ENCODE measurements at regions of chr4 and their contacts with region 1.

Region 1: GRCh38 chr4:139167774-139168444 is 9.1 kb downstream of the ELF2 start:
- DNase-seq: no peak
- ATAC-seq: no peak
- H3K4me3 ChIP-seq: no peak overlapping the region
- H3K27ac ChIP-seq: no peak overlapping the region
- H3K4me1 ChIP-seq: peaks cover 4 to 6% of the 10 kb centered on the region in 2 donors
- H3K27me3 ChIP-seq: no peaks in the 10 kb centered on the region

Region 2: GRCh38 chr4:138734746-138735145 is 433.2 kb before region 1 on chr4:
- intact Hi-C with region 1: no loop called
- DNase-seq: no peak
- ATAC-seq: no peak
- H3K4me3 ChIP-seq: no peak overlapping the region
- H3K27ac ChIP-seq: no peak overlapping the region
- H3K4me1 ChIP-seq: no peaks in the 10 kb centered on the region
- H3K27me3 ChIP-seq: no peaks in the 10 kb centered on the region

Region 3: GRCh38 chr4:139108567-139109128 is 59.3 kb before region 1 on chr4:
- intact Hi-C with region 1: loop called in 1 of 2 experiments (anchors 10 kb)
- DNase-seq: no peak
- ATAC-seq: no peak
- H3K4me3 ChIP-seq: no peak overlapping the region
- H3K27ac ChIP-seq: no peak overlapping the region
- H3K4me1 ChIP-seq: no peaks in the 10 kb centered on the region
- H3K27me3 ChIP-seq: no peaks in the 10 kb centered on the region